Activated CD8-positive, alpha-beta memory T cell treated with anti-CD3 and anti-CD28 coated beads, Interleukin-2, amount 10 ng/mL, durations not matched to agents 7 days and 5 days (primary cell): ENCODE measurements at regions of chr5 and their contacts with region 1.

Region 1: GRCh38 chr5:156929366-156929948 is 33.6 kb downstream of the TIMD4 start:
- DNase-seq: peak; percentile 48
- ATAC-seq: peak; percentile 64
- H3K4me3 Mint-ChIP-seq: no peak overlapping the region
- H3K27ac Mint-ChIP-seq: peak overlapping the region; percentile 78
- H3K4me1 Mint-ChIP-seq: peaks cover 69% of the 10 kb centered on the region
- H3K27me3 Mint-ChIP-seq: no peaks in the 10 kb centered on the region

Region 2: DNA sequence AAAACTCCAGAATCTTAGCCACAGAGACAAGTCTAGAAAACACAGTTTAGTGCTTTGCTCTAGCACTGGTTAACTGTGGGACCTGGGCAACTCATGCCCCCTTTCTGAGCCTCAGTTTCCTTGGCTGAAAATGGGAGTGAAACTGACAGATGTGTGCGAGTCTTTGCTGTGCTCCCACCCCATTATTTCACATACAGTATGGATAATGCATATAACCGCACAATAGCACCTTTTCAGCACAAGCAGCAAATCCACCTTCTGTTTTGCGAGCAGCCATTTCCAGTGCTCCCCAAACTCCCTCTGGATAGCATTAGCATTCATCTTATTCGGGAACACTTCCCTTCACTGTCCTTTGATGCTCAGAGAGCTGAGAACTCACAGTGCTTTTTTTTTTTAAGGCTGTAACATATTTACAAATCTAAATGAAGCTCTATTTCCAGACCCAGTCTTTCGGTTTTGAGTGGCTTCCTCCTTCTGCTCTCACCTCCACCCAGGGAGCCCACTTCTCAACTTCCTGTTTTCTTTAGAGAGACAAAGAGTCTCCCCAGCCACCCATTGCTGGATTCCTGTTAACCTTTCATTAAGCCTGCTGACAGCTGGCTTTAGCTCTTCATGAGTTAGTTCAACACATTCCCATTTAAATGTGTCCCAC is 15.6 kb before region 1 on chr5:
- CTCF ChIA-PET with region 1: interaction called, 26 read pairs
- DNase-seq: peak; percentile 64
- ATAC-seq: peak; percentile 87
- H3K4me3 Mint-ChIP-seq: peak overlapping the region; percentile 57
- H3K27ac Mint-ChIP-seq: peak overlapping the region; percentile 97
- H3K4me1 Mint-ChIP-seq: peaks cover 37% of the 10 kb centered on the region
- H3K27me3 Mint-ChIP-seq: no peaks in the 10 kb centered on the region